Adrenal gland (tissue), 19 donors: ENCODE measurements at regions of chr3 and their contacts with region 1.

Region 1: DNA sequence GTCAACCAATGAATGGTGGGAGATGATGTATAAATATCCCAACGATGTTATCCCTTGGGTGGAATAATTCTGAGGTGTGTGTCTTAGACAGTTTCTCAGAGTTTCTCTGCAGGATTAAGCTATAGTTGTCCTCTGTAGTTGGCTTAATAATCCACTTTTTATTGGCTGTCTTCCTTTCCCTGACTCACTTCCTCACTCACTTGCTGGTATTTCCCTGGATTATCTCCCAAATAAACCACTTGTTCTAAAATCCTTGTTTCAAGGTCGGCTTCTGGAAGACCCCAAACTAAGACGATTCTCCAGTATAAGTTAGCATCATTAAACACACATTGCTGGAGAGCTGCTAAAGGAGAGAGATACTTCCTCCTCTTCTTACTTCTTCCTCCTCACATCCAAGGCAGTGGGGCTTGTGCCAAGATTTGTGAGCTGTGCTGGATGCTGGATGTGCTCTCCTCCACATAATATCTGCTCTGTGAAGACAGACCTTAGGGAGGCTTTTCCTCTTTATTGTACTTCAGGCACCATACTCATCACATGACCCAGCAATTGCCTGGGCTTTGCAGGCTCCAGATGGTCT is 22.5 kb upstream of the ROPN1 start:
- DNase-seq: no peak
- H3K4me3 ChIP-seq: no peak overlapping the region
- H3K27ac ChIP-seq: no peak overlapping the region
- H3K4me1 ChIP-seq: no peaks in the 10 kb centered on the region
- H3K27me3 ChIP-seq: no peaks in the 10 kb centered on the region
- CTCF ChIP-seq: no peak
- POLR2A ChIP-seq: no peak

Region 2: DNA sequence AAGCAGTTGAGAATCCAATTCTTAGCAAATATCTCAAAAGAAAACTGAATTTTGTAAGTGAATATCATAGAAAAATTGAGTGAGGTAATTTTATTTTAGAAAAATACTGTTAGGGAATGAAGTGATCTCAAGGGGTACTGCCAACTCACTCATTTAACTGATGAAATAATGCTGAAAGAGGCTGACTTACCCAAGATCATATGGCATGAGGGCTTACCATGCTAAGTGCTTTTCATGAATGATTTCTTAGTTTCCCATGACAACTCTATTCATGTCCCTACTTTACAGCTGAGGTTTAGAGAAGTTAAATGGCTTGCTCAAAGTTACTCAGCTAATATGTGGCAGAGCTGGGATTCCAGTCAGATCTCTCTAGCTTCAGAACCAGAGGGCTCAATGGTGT is 84.0 kb before region 1 on chr3:
- intact Hi-C with region 1: no loop called
- DNase-seq: no peak
- H3K4me3 ChIP-seq: no peak overlapping the region
- H3K27ac ChIP-seq: no peak overlapping the region
- H3K4me1 ChIP-seq: no peaks in the 10 kb centered on the region
- H3K27me3 ChIP-seq: no peaks in the 10 kb centered on the region
- CTCF ChIP-seq: no peak
- POLR2A ChIP-seq: no peak

Region 3: GRCh38 chr3:124078953-124079911 is 64.8 kb after region 1 on chr3:
- intact Hi-C with region 1: loop called in 1 of 2 experiments (anchors 2 kb)
- DNase-seq: peak in 5 of 7 donors; percentile 21 to 50 (median 46)
- H3K4me3 ChIP-seq: no peak overlapping the region
- H3K27ac ChIP-seq: no peak overlapping the region
- H3K4me1 ChIP-seq: peaks cover 16 to 17% of the 10 kb centered on the region in 2 donors
- H3K27me3 ChIP-seq: no peaks in the 10 kb centered on the region
- CTCF ChIP-seq: peak; percentile 66 to 91 (median 72)
- POLR2A ChIP-seq: no peak

Region 4: DNA sequence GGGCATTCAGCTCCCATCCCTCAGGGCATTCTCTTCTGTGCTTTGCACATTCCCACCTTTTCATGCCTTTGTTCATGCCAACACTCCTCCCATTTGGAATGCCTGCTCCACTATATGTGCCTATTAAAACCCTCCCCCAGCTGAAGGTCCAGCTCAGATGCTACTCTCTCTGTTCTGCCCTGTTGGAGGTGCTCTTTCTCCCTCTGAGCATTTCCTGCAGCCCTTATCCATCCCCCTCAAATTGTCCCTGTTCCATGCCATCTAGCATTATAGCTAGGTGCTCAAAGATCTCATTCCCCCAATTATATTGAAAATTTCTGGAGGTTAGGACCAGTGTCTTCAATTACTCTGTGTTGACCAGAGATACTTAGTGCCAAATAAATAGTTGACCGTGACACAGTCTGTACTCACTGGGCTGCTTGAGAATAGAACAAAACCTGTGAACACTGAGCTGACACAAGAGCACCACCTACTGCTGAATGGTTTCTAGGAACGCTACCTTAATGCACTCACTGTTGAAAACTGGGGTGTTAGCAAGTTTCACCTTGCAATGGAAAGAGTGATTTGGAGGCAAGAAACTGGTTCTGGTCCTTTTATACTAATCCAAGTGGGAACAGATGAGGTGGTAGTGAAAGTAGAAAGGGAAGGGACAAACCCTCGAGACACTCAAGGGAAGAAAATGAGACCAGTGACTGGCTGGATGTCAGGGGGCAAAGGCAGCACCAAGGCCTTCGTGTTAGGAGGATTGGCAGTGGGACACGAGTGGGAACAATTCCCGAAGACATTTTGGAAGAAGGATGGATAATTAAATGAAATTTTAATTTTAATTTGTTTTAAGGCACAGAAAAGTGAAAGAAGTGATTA is 267.2 kb after region 1 on chr3:
- intact Hi-C with region 1: loop called in 1 of 2 experiments (anchors 2 kb)
- DNase-seq: peak in 5 of 7 donors; percentile 26 to 69 (median 57)
- H3K4me3 ChIP-seq: no peak overlapping the region
- H3K27ac ChIP-seq: no peak overlapping the region
- H3K4me1 ChIP-seq: peaks cover 4 to 16% of the 10 kb centered on the region in 2 donors
- H3K27me3 ChIP-seq: no peaks in the 10 kb centered on the region
- CTCF ChIP-seq: peak; percentile 41 to 78 (median 68)
- POLR2A ChIP-seq: no peak

Region 5: DNA sequence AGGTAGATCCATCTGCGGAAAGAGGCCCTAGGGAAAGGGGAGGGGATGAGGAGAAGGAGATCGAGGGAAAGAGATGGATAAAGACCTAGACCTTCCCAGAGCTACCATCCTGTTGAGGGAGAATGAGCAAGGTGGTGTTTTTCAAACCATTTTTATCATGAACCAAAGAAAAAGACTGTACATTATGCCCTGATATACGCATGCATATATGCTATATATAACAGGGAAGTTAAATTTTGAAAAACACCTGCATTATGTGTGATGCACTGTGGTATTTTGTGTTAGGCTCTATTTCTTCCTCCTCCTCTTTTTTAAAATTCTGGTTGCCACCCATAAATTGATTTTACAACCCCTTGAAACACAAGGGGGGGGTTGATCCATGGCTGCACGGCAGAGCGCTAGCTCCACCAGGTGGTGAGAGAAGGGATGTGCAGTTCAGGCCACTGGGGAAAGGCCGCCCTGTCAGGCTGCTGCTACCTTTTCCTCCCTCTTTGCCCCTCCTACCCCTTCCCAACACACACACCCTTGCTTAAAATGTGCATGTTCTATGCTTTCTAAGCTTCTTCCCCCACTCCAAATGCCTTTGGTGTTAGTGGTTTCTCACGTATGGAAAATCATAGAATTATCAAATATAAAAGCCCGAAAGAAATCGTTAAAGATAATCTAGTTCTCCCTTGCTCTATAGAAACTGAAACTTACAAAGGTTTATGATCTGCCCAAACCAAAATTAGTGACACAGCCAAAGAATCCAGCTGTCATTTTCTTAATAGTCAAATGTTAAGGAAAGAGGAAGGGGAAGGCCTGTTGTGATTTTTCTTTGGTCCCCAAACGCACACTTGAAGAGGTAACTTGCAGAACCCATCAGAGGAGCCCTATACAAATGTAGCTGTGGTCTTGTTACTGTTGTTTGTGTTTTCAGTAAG is 453.8 kb after region 1 on chr3:
- intact Hi-C with region 1: loop called in 1 of 2 experiments (anchors 5 kb)
- DNase-seq: peak; percentile 31 to 65 (median 42)
- H3K4me3 ChIP-seq: no peak overlapping the region
- H3K27ac ChIP-seq: no peak overlapping the region
- H3K4me1 ChIP-seq: no peaks in the 10 kb centered on the region
- H3K27me3 ChIP-seq: no peaks in the 10 kb centered on the region
- CTCF ChIP-seq: peak; percentile 87 to 97 (median 93)
- POLR2A ChIP-seq: no peak